WTC11 (cell line): ENCODE measurements at regions of chr7 and their contacts with region 1.

Region 1: DNA sequence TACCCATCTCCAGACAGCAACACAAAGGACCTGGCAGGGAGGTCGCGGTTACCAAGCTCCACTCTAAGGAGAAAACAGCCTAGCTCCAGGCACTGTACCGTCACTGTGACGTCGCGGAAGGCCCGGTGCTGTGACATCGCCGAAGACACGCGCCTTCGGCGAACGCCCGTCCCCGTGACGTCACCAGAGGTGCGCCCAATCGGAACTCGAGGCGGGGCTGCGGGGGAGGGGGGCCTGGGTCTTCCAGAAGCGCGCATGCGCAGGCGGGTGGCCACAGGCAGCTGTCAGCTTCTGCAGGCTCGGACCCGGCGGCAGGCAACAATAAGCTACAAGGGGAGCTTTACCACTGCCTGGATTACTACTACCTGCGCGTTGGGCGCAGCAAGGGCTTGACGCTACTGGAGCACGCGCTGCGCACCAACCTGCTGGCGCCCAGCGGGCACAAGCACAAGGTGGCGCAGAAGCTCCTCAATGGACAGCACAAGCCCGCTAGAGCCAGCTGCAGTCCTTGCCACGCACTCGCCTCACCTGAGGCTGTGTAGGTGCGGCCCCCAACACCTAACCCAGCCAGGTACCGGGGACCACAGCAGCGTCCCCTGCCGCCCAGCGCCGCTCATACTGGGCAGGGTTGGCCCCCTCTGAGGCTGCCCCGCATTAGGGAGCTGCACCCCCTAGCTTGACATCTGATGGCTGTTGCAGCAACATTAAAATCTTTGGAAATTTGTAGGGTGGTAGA is 208.4 kb downstream of the TPST1 start:
- DNase-seq: peak; percentile 97
- ATAC-seq: peak; percentile 93
- H3K4me3 Mint-ChIP-seq: peak overlapping the region; percentile 67
- H3K27ac Mint-ChIP-seq: peak overlapping the region; percentile 74
- H3K4me1 Mint-ChIP-seq: peaks cover 12% of the 10 kb centered on the region; the same call in 1 of the 2 replicates
- H3K27me3 Mint-ChIP-seq: peaks cover 16% of the 10 kb centered on the region
- CTCF ChIP-seq: peak; percentile 22; the same call in 1 of the 2 replicates

Region 2: GRCh38 chr7:66033471-66034385 is 379.8 kb before region 1 on chr7:
- CTCF ChIA-PET with region 1: interaction called, 14 read pairs
- POLR2A ChIA-PET with region 1: interaction called, 3 read pairs
- DNase-seq: no peak
- ATAC-seq: no peak
- H3K4me3 Mint-ChIP-seq: no peak overlapping the region
- H3K27ac Mint-ChIP-seq: no peak overlapping the region
- H3K4me1 Mint-ChIP-seq: no peaks in the 10 kb centered on the region
- H3K27me3 Mint-ChIP-seq: no peaks in the 10 kb centered on the region
- CTCF ChIP-seq: no peak

Region 3: DNA sequence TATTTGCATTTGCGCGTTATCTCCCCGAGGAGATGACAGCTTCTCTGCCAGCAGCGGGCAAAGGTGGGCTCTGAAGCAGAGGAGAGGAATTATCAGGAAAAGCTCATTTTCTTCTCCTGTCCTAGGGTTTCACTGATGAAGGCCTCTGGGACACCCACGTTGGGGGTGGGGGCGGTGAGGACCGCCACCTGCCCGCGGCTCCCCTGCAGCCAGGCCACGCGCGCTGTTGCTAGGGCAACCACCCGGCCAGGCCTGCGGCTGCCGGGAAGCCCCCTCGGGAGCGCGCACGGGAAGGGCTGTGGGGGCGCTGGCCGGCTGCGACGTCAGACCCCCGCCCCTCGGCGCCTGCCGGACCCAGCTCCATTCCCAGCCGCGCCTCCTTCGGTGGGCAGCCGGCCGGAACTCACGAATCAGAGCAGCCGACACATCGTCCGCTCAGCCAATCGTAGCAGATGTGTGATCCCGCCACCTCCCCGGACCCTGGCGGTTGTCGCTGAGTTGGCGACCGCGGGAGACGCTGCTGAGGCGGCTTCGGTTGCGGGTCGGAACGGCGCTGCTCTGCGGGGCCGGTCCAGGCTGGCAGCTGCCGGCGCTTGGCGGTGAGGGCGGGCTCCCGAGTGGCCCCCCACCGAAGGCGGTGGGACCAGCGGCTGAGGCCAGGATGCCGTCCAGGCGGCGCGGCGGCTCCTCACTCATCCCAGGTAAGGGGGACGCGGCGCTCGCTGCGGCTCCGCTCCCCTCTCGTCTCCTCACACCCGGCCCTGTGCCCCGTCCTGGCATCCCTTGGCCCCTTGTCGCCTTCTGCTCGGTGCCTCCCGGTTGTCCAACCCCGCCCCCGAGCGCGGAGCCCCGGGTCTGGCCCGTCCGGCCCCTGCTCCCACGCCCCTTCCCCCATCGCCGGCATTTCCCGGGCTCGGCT is 208.5 kb before region 1 on chr7 and contains the start of gene TPST1:
- CTCF ChIA-PET with region 1: interaction called, 25 read pairs
- POLR2A ChIA-PET with region 1: interaction called, 8 read pairs
- DNase-seq: peak; percentile 95
- ATAC-seq: peak; percentile 97
- H3K4me3 Mint-ChIP-seq: peak within 1 kb of the TSS; percentile 95
- H3K27ac Mint-ChIP-seq: peak within 1 kb of the TSS; percentile 97
- H3K4me1 Mint-ChIP-seq: peaks cover 14% of the 10 kb centered on the region
- H3K27me3 Mint-ChIP-seq: peaks cover 11% of the 10 kb centered on the region
- CTCF ChIP-seq: no peak
- total RNA-seq, gene TPST1: 15.0 to 17.7 TPM (median 16.8 TPM) in 3 replicates

Region 4: DNA sequence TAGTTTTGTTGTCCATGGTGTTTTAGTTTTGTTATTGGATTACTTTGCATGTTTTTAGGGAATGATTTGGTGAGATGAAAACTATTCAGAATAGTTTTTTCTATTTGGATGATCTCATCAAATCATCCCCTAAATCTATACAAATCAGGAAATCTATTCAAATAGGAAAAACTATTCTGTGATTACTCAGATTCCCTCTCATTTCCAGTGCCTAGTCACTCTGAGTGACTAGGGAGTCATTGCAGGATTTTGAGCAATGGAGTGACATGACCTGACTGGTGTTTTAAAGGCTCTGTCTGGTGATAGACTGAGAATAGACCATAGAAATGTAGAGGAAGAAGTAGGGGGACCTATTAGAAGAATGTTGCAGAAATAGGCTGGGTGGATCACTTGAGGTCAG is 136.1 kb before region 1 on chr7:
- CTCF ChIA-PET with region 1: no interaction called
- POLR2A ChIA-PET with region 1: no interaction called
- DNase-seq: no peak
- ATAC-seq: no peak
- H3K4me3 Mint-ChIP-seq: no peak overlapping the region
- H3K27ac Mint-ChIP-seq: no peak overlapping the region
- H3K4me1 Mint-ChIP-seq: peaks cover 14% of the 10 kb centered on the region
- H3K27me3 Mint-ChIP-seq: no peaks in the 10 kb centered on the region
- CTCF ChIP-seq: no peak

Region 5: DNA sequence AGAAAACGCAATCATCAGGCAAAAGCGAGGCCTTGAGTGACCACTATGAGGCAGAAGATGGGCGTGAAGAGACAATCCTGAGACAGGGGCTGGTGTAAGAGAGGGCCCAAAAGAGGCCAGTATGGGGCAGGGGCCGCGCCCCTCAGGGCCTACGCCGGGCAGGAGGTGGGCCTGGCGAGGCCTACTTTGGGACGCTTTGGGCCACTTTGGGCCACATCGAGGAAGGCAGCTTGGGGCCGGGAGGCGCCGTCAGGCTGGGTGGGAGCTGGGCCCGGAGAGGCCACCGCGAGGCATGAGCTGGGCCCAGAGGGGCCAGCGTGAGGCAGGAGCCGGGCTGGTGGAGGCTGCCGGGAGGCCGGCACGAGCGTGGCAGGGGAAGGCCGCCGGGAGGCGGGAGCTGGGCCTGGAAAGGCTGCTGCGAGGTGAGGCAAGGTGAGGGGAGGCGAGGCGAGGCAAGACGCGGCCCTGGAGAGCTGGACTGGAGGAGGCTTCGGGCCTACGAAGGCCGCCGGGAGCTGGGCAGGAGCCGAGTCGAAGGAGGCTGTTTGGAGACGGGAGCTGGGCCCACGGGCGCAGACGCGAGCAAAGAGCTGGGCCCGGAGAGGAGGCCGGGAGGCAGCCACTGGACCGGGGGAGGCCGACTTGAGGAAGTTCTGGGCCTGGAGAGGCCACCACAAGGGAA is 37.1 kb before region 1 on chr7:
- CTCF ChIA-PET with region 1: interaction called, 11 read pairs
- POLR2A ChIA-PET with region 1: no interaction called
- DNase-seq: no peak
- ATAC-seq: peak; percentile 66
- H3K4me3 Mint-ChIP-seq: no peak overlapping the region
- H3K27ac Mint-ChIP-seq: peak overlapping the region; percentile 82; the same call in 1 of the 2 replicates
- H3K4me1 Mint-ChIP-seq: no peaks in the 10 kb centered on the region
- H3K27me3 Mint-ChIP-seq: no peaks in the 10 kb centered on the region
- CTCF ChIP-seq: no peak

Region 6: GRCh38 chr7:66493235-66494181 is 80.0 kb after region 1 on chr7:
- CTCF ChIA-PET with region 1: interaction called, 13 read pairs
- POLR2A ChIA-PET with region 1: interaction called, 10 read pairs
- DNase-seq: peak; percentile 98
- ATAC-seq: peak; percentile 84
- H3K4me3 Mint-ChIP-seq: peak overlapping the region; percentile 88
- H3K27ac Mint-ChIP-seq: peak overlapping the region; percentile 99
- H3K4me1 Mint-ChIP-seq: peaks cover 31% of the 10 kb centered on the region
- H3K27me3 Mint-ChIP-seq: no peaks in the 10 kb centered on the region; the same call in 1 of the 2 replicates
- CTCF ChIP-seq: no peak